Activated B cell treated with CpG ODN at 0.5 μM for 24 hours (primary cell): ENCODE measurements at regions of chr11 and their contacts with region 1.

Region 1: DNA sequence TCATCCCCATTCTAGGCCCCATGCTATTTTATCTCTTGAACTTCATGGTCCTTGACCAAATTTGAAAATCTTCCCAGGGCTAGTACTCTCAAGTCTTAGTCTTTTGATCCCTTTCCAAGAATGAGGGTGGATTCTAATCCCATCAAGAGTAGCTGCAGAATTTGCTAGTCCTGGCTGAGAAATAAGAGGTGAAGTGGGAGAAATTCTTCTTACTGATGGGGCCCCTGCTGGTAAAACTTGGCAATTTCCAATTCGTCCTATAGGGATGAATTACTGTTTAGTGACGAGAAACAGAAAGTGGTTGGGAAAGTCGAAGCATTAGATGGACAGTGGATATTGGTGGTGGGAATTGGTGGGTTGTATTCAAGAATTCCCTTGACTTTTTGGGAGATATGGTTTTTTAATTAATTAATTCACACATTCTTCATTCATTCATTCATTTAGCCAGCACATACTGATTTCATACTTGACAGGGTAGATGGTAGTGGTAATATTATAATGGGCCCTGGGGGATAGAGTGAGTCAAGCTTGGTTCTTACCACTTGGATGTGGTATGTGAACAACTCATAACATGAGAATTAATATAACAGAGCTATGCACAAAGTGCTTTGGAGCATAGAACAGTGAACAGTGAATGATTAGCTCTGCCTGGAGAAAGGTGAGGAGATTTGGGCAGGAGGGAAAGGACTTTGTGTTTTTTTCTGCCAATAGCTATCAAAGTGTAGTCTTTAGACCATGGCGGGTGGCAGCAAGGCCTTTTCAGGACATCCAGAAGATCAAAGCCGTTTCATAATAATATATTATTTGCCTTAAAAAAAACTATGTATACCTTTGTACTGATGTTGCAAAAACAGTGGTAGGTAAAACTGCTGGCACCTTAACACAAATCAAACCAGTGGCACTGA is 103.8 kb downstream of the STIM1 start:
- DNase-seq: no peak
- ATAC-seq: peak; percentile 92
- H3K4me3 Mint-ChIP-seq: no peak overlapping the region
- H3K27ac Mint-ChIP-seq: peak overlapping the region; percentile 38
- H3K4me1 Mint-ChIP-seq: peaks cover 60% of the 10 kb centered on the region
- H3K27me3 Mint-ChIP-seq: no peaks in the 10 kb centered on the region
- CTCF ChIP-seq: no peak

Region 2: DNA sequence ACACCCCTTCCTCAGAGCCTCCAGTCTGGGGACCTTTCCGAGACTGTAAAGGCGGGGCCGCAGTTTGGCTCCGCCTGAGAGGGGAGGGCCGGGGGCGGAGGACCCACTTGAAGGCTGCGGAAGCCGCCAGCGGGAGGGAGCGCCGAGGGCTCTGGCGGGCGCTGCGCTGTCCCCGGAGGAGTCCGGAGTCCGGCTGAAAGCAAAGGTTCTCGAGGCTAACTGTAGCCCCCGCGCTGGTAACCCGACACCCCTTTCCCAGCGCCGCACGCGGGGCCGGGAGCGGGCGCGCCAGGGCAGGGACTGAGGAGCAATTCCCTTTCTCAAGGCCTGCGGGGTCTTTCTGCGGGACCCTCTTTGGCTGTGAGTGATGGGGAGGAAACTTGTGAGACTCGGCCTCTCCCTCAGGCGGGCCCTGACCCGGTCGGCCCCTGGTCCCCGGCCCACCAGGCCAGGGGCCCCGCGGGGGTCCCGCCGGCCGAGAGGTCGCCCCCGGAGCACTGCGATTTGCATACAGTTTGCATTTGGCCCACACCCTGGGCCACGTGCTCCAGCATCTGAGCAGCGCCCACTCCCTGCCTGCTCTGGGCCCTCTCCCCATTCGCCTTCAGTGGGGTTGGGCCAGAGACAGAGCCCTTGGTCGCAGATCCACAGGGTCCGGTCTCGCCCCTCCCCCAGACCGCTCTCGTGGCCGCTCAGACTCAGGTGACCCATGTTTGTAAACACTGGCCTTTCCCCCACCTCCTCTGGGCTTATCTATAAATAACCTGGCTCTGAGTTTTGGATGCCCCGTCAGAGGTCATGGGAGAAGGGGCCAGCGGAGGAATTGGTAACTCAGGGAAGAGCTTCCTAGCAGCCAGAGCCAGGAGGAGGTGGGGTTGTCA is 317.0 kb before region 1 on chr11:
- CTCF ChIA-PET with region 1: no interaction called
- POLR2A ChIA-PET with region 1: no interaction called
- intact Hi-C with region 1: no loop called
- DNase-seq: no peak
- ATAC-seq: peak; percentile 86
- H3K4me3 Mint-ChIP-seq: peak overlapping the region; percentile 65
- H3K27ac Mint-ChIP-seq: no peak overlapping the region
- H3K4me1 Mint-ChIP-seq: peaks cover 9% of the 10 kb centered on the region
- H3K27me3 Mint-ChIP-seq: peaks cover 52% of the 10 kb centered on the region
- CTCF ChIP-seq: no peak

Region 3: GRCh38 chr11:3920148-3920852 is 39.0 kb before region 1 on chr11:
- CTCF ChIA-PET with region 1: no interaction called
- POLR2A ChIA-PET with region 1: interaction called, 6 read pairs
- intact Hi-C with region 1: loop called (anchors 5 kb)
- DNase-seq: no peak
- ATAC-seq: peak; percentile 76
- H3K4me3 Mint-ChIP-seq: peak overlapping the region; percentile 39
- H3K27ac Mint-ChIP-seq: peak overlapping the region; percentile 66
- H3K4me1 Mint-ChIP-seq: peaks cover 55% of the 10 kb centered on the region
- H3K27me3 Mint-ChIP-seq: no peaks in the 10 kb centered on the region
- CTCF ChIP-seq: no peak